IMR-90 (cell line): ENCODE measurements at regions of chr12 and their contacts with region 1.

Region 1: GRCh38 chr12:132614861-132615578 is 3.6 kb upstream of the P2RX2 start:
- DNase-seq: peak; percentile 78
- ATAC-seq: peak; percentile 74
- H3K4me3 ChIP-seq: no peak overlapping the region
- H3K27ac ChIP-seq: no peak overlapping the region
- H3K4me1 ChIP-seq: no peaks in the 10 kb centered on the region
- H3K27me3 ChIP-seq: peaks cover 45% of the 10 kb centered on the region
- CTCF ChIP-seq: peak; percentile 91
- POLR2A ChIP-seq: no peak
- RAD21 ChIP-seq: peak; percentile 89

Region 2: GRCh38 chr12:131793243-131794022 is 821.6 kb before region 1 on chr12:
- CTCF ChIA-PET with region 1: no interaction called
- POLR2A ChIA-PET with region 1: no interaction called
- dilution Hi-C with region 1: no loop called
- in situ Hi-C with region 1: no loop called
- intact Hi-C with region 1: no loop called
- DNase-seq: peak; percentile 17
- ATAC-seq: no peak
- H3K4me3 ChIP-seq: no peak overlapping the region
- H3K27ac ChIP-seq: no peak overlapping the region
- H3K4me1 ChIP-seq: no peaks in the 10 kb centered on the region
- H3K27me3 ChIP-seq: no peaks in the 10 kb centered on the region
- CTCF ChIP-seq: no peak
- POLR2A ChIP-seq: no peak
- RAD21 ChIP-seq: no peak

Region 3: DNA sequence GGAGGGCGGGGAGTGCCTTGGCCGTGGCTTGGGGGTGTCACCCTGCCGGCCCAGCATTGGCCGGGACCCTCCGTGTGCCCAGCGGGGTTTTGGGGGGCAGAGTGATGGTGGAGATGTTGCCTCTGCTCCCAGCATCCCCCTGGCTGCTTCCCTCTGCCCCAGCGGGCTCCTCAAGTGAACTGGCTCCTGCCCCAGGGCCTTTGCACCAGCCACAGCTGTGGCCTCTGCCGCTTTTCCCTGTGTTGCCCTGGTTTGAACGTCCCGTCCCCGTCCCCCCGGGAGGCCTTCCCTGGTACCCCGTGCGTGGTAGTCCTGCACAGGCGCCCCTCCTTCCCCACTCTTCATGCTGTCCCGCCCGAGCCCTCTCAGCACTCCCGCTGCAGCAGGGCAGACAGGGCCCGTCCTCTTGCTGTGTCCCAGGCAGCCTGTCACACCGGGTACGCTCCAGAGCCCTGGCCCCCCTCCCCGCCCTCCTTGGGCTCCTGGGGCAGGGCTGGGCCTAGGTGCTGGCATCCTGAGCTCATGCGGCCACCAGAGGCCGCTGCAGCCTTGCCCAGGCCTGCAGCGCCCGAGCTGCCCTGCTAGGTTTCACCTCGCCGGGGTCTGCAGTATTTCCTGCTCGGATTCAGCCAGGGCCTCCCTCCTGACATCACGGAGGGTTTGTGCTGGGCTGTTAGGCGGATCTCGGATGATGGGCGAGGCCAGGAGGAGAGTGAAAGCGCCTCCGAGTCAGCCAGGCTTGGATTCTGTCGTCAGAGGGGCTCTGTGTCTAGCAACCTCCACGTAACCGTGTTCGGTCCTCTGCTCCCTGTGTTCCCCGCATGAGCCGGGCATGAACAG is 461.3 kb before region 1 on chr12:
- CTCF ChIA-PET with region 1: interaction called, 5 read pairs
- POLR2A ChIA-PET with region 1: no interaction called
- dilution Hi-C with region 1: no loop called
- in situ Hi-C with region 1: no loop called
- intact Hi-C with region 1: loop called (anchors 5 kb)
- DNase-seq: peak; percentile 61
- ATAC-seq: peak; percentile 99
- H3K4me3 ChIP-seq: no peak overlapping the region
- H3K27ac ChIP-seq: no peak overlapping the region
- H3K4me1 ChIP-seq: no peaks in the 10 kb centered on the region
- H3K27me3 ChIP-seq: no peaks in the 10 kb centered on the region
- CTCF ChIP-seq: peak; percentile 93
- POLR2A ChIP-seq: 0 out of 2 replicates have a peak, but pooled peaks have one; percentile 37
- RAD21 ChIP-seq: peak; percentile 97

Region 4: DNA sequence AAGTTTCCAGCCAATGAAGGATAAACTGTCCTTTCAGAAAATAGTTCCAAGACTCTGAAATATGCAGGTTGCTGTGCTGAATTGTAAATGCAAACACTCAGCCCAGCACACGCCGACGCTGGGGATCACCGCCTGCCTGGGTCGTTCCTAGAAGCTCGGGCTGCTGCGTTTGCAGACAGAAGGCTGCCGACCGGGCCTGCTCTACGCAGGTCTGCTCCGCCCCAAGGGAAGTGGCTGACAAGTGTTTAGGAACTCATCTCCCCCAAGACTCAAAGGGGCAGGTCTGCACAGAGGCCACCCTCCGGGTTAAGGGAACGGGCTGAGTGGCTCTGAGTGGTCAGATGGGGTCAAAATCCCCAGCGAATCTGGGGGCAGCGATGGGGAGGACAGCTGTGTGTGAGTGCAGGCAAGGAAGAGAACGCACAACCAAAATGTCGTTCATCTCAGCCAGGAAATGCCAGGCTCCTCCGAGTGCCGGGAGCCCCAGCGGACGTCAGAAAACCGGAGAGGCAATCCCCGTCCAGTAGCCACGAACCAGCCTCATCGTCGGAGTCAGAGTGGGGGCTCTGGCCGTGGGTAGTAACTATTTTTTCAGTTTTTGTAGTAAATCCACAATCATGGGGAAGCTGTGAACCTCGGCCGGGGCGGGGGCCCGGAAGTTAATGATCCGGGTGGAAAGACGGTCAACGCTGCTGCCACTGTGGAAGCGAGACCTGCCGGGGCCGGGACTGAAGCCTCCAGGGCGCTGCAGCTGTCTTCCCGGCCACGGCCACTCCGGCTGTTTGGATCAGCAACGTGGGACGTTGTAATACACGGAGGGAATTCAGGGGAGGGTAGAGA is 291.6 kb before region 1 on chr12:
- CTCF ChIA-PET with region 1: no interaction called
- POLR2A ChIA-PET with region 1: no interaction called
- dilution Hi-C with region 1: no loop called
- in situ Hi-C with region 1: no loop called
- intact Hi-C with region 1: no loop called
- DNase-seq: no peak
- ATAC-seq: peak; percentile 19; the same call in 1 of the 2 replicates
- H3K4me3 ChIP-seq: no peak overlapping the region
- H3K27ac ChIP-seq: no peak overlapping the region
- H3K4me1 ChIP-seq: no peaks in the 10 kb centered on the region
- H3K27me3 ChIP-seq: peaks cover 12% of the 10 kb centered on the region; the same call in 1 of the 2 replicates
- CTCF ChIP-seq: no peak
- POLR2A ChIP-seq: no peak
- RAD21 ChIP-seq: no peak

Region 5: GRCh38 chr12:132414634-132415326 is 200.2 kb before region 1 on chr12:
- CTCF ChIA-PET with region 1: interaction called, 5 read pairs
- POLR2A ChIA-PET with region 1: no interaction called
- dilution Hi-C with region 1: no loop called
- in situ Hi-C with region 1: loop called (anchors 5 kb)
- intact Hi-C with region 1: loop called (anchors 1 kb)
- DNase-seq: peak; percentile 59
- ATAC-seq: peak; percentile 100
- H3K4me3 ChIP-seq: no peak overlapping the region
- H3K27ac ChIP-seq: no peak overlapping the region
- H3K4me1 ChIP-seq: no peaks in the 10 kb centered on the region
- H3K27me3 ChIP-seq: peaks cover 12% of the 10 kb centered on the region
- CTCF ChIP-seq: peak; percentile 95
- POLR2A ChIP-seq: peak; percentile 44; the same call in 1 of the 2 replicates
- RAD21 ChIP-seq: peak; percentile 98

Region 6: GRCh38 chr12:132560614-132561426 is 54.2 kb before region 1 on chr12:
- CTCF ChIA-PET with region 1: no interaction called
- POLR2A ChIA-PET with region 1: no interaction called
- dilution Hi-C with region 1: no loop called
- in situ Hi-C with region 1: no loop called
- intact Hi-C with region 1: loop called (anchors 5 kb)
- DNase-seq: peak; percentile 51
- ATAC-seq: peak; percentile 50
- H3K4me3 ChIP-seq: peak overlapping the region; percentile 93
- H3K27ac ChIP-seq: no peak overlapping the region; the same call in 1 of the 2 replicates
- H3K4me1 ChIP-seq: no peaks in the 10 kb centered on the region; the same call in 1 of the 2 replicates
- H3K27me3 ChIP-seq: no peaks in the 10 kb centered on the region
- CTCF ChIP-seq: peak; percentile 66
- POLR2A ChIP-seq: no peak
- RAD21 ChIP-seq: peak; percentile 52

Region 7: DNA sequence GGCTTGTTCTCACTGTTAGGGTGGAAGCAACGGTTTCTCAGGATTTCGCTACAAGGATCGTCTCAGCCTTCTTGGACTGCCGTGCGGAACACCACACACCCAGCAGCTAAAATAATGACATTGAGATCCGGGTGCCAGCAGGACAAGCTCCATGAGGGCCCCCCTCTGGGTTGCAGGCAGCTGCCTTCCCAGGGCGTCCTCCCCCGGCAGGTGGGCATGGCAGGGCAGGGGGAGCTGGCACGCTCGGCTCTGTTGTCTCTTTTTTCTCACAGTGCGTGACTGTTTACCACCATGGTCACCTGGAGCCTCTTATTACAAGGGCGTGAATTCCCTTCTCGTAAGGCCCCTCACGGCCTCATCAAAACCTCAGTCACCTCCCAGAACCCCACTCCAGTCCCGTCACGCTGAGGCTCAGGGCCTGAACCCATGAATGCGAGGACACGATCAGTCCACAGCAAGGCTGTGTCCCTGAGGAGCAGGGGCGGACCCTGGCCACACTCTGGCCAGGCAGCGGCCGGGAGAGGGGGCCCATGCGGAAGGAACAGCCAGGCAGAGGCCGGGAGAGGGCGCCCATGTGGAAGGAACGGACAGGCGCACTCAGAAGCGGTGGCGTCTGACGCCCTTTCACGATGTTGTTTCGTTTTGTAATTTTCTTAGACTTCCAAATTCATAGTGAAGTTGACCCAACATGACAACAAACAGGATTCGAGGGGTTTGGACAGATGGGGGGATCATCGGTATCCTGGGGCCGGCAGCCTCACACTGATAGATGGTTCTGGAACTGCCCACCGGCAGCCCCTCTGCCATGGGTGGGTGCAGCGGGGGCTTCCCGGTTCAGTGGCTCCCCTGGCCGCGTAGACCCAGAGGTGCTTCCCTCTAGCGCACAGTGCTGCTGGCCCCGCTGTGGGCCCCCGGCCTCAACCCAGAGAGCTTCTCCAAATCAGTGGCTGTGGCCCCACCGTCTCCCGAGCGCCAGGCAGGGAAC is 14.7 kb before region 1 on chr12:
- CTCF ChIA-PET with region 1: interaction called, 7 read pairs
- POLR2A ChIA-PET with region 1: no interaction called
- dilution Hi-C with region 1: no loop called
- in situ Hi-C with region 1: no loop called
- intact Hi-C with region 1: loop called (anchors 1 kb)
- DNase-seq: peak; percentile 61
- ATAC-seq: peak; percentile 83
- H3K4me3 ChIP-seq: peak overlapping the region; percentile 34
- H3K27ac ChIP-seq: no peak overlapping the region
- H3K4me1 ChIP-seq: peaks cover 11% of the 10 kb centered on the region; the same call in 1 of the 2 replicates
- H3K27me3 ChIP-seq: peaks cover 19% of the 10 kb centered on the region; the same call in 1 of the 2 replicates
- CTCF ChIP-seq: peak; percentile 82
- POLR2A ChIP-seq: no peak
- RAD21 ChIP-seq: peak; percentile 73

Region 8: DNA sequence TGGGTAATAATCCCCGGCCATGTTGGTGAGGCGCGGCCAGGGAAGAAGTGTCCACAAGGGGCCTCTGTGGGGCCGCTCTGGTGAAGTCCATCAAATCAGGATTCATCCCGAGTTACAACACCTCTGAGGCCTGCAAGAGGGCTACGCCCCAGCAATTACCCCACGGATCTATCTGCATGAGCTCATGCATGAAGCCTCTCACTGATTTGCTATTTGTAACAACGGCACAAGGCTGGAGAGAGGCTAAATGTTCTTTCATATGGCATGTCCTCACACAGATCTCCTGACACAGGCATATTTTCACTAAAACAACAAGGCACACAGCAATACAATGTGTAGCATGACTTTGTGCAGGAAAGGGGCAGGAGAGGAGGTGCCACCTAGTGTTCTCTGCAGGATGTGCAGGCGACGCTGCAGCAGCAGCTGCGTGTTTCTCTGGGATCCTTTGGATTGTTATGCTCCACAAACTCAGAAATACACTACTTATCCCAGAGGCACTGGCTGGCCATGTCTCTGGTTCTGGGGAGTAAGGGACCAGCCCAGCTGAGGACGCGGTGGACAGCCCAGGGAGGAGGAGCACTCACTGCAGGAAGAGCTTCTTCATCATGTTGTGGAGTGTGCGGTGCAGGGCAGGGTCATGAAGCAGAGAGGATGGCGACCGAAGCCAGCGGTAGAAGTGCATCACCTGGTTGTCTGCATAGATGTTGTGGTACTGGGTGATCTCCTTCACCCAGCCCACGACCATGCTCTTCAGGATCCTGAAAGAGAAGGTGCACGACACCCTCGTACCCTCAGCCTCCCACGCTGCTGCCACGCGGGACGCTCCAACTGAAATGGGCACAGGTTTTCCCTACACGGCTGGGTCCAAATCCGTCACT is 23.8 kb after region 1 on chr12:
- CTCF ChIA-PET with region 1: interaction called, 11 read pairs
- POLR2A ChIA-PET with region 1: no interaction called
- dilution Hi-C with region 1: no loop called
- in situ Hi-C with region 1: no loop called
- intact Hi-C with region 1: no loop called
- DNase-seq: peak; percentile 60
- ATAC-seq: peak; percentile 99
- H3K4me3 ChIP-seq: no peak overlapping the region
- H3K27ac ChIP-seq: no peak overlapping the region
- H3K4me1 ChIP-seq: no peaks in the 10 kb centered on the region
- H3K27me3 ChIP-seq: no peaks in the 10 kb centered on the region
- CTCF ChIP-seq: peak; percentile 75
- POLR2A ChIP-seq: no peak
- RAD21 ChIP-seq: peak; percentile 65

Region 9: DNA sequence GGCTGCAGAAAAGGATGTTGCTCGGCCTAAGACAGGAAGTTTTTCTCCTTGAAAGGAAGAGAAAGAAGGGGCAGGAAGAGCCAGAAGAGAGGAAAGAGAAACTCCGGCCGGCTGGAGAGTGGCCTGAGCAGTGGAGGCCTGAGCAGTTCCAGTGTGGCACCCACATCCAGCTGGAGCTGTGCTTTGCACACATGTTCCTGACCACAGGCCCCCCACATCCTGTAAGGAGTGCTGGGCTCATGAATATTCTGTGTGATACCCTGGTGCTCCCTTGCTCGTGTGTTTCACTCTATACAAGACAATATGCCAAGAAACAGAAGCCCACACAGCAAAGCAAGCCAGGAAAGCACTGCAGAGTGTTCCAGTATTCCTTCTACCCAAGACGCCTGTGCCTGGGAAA is 45.0 kb after region 1 on chr12:
- CTCF ChIA-PET with region 1: no interaction called
- POLR2A ChIA-PET with region 1: no interaction called
- dilution Hi-C with region 1: no loop called
- in situ Hi-C with region 1: no loop called
- intact Hi-C with region 1: no loop called
- DNase-seq: no peak
- ATAC-seq: no peak
- H3K4me3 ChIP-seq: no peak overlapping the region
- H3K27ac ChIP-seq: no peak overlapping the region
- H3K4me1 ChIP-seq: no peaks in the 10 kb centered on the region
- H3K27me3 ChIP-seq: no peaks in the 10 kb centered on the region
- CTCF ChIP-seq: no peak
- POLR2A ChIP-seq: no peak
- RAD21 ChIP-seq: no peak